Endothelial cell of umbilical vein (primary cell): ENCODE measurements at regions of chr20 and their contacts with region 1.

Region 1: GRCh38 chr20:1802385-1803060 is 92.7 kb upstream of the SIRPA start:
- DNase-seq: peak; percentile 76
- H3K4me3 ChIP-seq: peak overlapping the region; percentile 49 to 66 (median 56)
- H3K27ac ChIP-seq: peak overlapping the region; percentile 42
- H3K4me1 ChIP-seq: peaks cover 13% of the 10 kb centered on the region
- H3K27me3 ChIP-seq: peaks cover 3 to 5% of the 10 kb centered on the region in 2 experiments
- CTCF ChIP-seq: peak; percentile 64 to 84
- POLR2A ChIP-seq: no peak

Region 2: GRCh38 chr20:1509237-1509636 is 293.3 kb before region 1 on chr20:
- CTCF ChIA-PET with region 1: interaction called, 12 read pairs
- POLR2A ChIA-PET with region 1: no interaction called
- dilution Hi-C with region 1: no loop called
- intact Hi-C with region 1: no loop called
- DNase-seq: peak; percentile 36
- H3K4me3 ChIP-seq: no peak overlapping the region
- H3K27ac ChIP-seq: no peak overlapping the region
- H3K4me1 ChIP-seq: no peaks in the 10 kb centered on the region
- H3K27me3 ChIP-seq: peaks cover 26 to 43% of the 10 kb centered on the region in 2 experiments
- CTCF ChIP-seq: peak; percentile 24 to 48
- POLR2A ChIP-seq: no peak

Region 3: GRCh38 chr20:1790386-1790785 is 12.1 kb before region 1 on chr20:
- CTCF ChIA-PET with region 1: interaction called, 19 read pairs
- POLR2A ChIA-PET with region 1: no interaction called
- dilution Hi-C with region 1: no loop called
- intact Hi-C with region 1: no loop called
- DNase-seq: no peak
- H3K4me3 ChIP-seq: no peak overlapping the region
- H3K27ac ChIP-seq: no peak overlapping the region
- H3K4me1 ChIP-seq: peaks cover 17% of the 10 kb centered on the region
- H3K27me3 ChIP-seq: peaks cover 21 to 33% of the 10 kb centered on the region in 2 experiments
- CTCF ChIP-seq: no peak
- POLR2A ChIP-seq: no peak

Region 4: GRCh38 chr20:1867495-1868260 is 65.2 kb after region 1 on chr20:
- CTCF ChIA-PET with region 1: interaction called, 6 read pairs
- POLR2A ChIA-PET with region 1: no interaction called
- dilution Hi-C with region 1: no loop called
- intact Hi-C with region 1: loop called (anchors 2 kb)
- DNase-seq: no peak
- H3K4me3 ChIP-seq: no peak overlapping the region
- H3K27ac ChIP-seq: no peak overlapping the region
- H3K4me1 ChIP-seq: no peaks in the 10 kb centered on the region
- H3K27me3 ChIP-seq: peaks cover 10 to 12% of the 10 kb centered on the region in 2 experiments
- CTCF ChIP-seq: no peak
- POLR2A ChIP-seq: no peak

Region 5: DNA sequence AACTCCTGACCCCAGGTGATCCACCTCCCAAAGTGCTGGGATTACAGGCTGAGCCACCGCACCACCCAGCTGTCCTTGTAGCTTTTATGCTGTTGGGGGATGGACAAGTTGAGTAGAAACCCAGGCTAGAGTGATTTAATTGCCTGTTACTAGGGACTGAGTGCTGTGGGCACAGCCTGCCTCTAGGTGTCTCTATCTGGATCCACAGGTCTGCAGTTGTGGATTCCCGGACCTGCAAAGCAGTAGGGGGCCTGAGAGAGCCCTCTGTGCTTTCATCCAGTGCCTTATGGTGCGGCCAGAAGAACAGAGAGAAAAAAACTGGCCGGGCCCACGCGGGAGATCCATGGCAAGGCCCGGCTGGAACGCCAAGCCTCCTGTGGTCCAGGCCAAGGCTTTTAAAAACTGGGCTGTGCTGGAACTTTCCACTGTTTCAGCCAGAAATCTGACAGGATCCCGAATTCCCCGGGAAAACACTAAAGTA is 97.8 kb after region 1 on chr20:
- CTCF ChIA-PET with region 1: interaction called, 34 read pairs
- POLR2A ChIA-PET with region 1: no interaction called
- dilution Hi-C with region 1: no loop called
- intact Hi-C with region 1: loop called (anchors 1 kb)
- DNase-seq: peak; percentile 78
- H3K4me3 ChIP-seq: no peak overlapping the region
- H3K27ac ChIP-seq: no peak overlapping the region
- H3K4me1 ChIP-seq: peaks cover 8% of the 10 kb centered on the region
- H3K27me3 ChIP-seq: no peaks in the 10 kb centered on the region
- CTCF ChIP-seq: peak; percentile 48 to 82
- POLR2A ChIP-seq: no peak

Region 6: GRCh38 chr20:2172305-2173175 is 370.0 kb after region 1 on chr20:
- CTCF ChIA-PET with region 1: interaction called, 33 read pairs
- POLR2A ChIA-PET with region 1: no interaction called
- dilution Hi-C with region 1: no loop called
- intact Hi-C with region 1: loop called (anchors 1 kb)
- DNase-seq: peak; percentile 54
- H3K4me3 ChIP-seq: no peak overlapping the region
- H3K27ac ChIP-seq: no peak overlapping the region
- H3K4me1 ChIP-seq: no peaks in the 10 kb centered on the region
- H3K27me3 ChIP-seq: peaks cover 0 to 8% of the 10 kb centered on the region in 2 experiments
- CTCF ChIP-seq: peak; percentile 88 to 90
- POLR2A ChIP-seq: no peak